ENCODE measurements at regions of chr1 and their contacts with region 1.

Region 1: DNA sequence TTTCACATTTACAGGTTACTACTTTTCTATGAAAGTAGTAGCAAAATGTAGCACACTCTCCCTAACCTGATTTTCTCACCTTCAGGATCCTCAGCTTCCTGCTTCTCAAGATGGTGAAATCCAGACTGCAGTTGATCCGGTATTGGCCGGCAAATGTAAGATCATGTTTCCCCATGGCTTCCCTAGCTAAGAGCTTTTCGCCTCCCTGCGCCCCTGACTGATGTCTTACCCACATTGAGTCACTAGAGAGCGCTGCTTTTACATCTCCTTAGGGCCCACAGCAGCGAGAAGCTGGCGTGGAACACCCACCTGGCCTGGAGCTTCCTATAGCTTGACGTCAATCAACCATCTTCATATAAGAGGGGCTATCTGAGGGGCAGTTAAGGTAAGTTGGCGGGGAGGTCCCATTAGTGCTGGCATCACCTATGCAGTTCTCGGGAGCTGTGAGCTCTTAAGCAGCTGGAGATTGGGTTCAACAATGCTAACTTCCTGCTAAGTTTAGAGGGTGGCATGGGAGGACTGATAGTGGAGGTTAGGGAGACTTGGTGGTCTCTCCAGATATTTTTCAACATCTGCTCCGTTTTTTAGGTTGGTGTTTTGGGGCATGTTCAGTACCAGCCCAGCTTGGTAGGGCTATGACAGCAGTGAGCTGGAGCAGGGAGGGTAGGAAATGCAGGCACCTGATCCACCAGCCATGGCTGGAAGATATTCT is 5.5 kb downstream of the PTPN7 start:
- DNase-seq: peak; percentile 26
- H3K4me3 ChIP-seq: no peak overlapping the region
- CTCF ChIP-seq: peak; percentile 58

Region 2: DNA sequence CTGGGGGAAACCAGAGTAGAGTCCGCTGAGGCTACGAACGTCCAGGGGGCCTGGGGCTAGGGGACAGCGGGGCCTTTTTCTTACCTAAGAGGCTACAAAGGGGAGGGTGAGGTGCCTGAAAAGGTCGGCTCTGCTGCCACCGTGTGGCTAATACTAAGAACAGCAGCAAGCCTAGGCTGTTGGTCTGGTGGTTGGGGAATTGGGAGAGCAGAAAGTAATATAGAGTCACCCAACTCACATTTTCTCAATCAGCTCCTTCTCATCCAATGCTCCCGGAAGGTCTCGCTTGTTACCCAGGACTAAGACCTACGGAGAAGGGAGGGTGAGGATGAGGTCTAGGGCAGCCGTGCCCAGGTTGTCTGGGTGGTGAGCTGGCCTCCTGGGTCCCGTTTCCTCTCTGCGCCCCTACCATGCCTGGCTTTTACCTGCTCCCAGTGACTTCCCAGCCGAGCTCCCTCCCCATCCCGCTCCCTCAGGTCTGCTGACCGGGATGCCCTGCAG is 19.7 kb before region 1 on chr1:
- CTCF ChIA-PET with region 1: interaction called, 37 read pairs
- POLR2A ChIA-PET with region 1: no interaction called
- DNase-seq: no peak
- H3K4me3 ChIP-seq: no peak overlapping the region
- CTCF ChIP-seq: peak; percentile 85

Region 3: DNA sequence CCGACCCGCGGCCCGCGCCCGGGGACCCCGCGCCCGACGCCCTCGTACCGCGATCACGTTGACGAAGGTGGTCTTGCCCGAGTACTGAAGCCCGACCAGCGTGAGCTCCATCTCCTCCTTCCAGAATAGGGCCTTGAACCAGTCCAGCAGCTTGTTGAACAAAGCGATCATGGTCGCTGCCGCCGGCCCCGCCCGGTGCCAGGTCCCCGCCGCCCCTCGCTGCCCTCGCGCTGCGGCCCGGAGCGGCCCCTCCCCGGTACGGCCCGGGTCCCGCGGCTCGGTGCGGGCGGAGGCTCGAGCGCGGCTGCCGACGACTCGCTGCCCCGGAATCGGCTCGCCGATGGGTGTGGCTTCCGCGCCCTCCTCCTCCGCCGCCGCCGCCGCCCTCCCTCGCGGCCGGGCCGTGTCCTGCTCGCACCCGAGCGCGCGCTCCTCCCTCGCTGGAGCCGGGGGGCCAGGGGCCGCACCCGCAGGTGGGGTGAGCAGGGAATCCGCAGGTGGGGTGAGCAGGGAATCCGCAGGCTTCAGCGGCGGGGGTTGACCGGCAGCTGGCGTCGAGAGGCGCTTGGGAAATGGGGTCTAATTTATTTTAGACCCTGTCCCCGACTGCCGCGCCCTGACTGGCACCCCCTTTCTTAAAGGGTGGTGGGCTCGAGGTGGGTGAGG is 10.4 kb before region 1 on chr1 and contains the start of gene ARL8A:
- CTCF ChIA-PET with region 1: interaction called, 16 read pairs
- POLR2A ChIA-PET with region 1: no interaction called
- DNase-seq: no peak
- H3K4me3 ChIP-seq: peak within 1 kb of the TSS; percentile 76
- CTCF ChIP-seq: no peak